Ascending aorta (tissue), 2 donors: ENCODE measurements at regions of chr12 and their contacts with region 1.

Region 1: DNA sequence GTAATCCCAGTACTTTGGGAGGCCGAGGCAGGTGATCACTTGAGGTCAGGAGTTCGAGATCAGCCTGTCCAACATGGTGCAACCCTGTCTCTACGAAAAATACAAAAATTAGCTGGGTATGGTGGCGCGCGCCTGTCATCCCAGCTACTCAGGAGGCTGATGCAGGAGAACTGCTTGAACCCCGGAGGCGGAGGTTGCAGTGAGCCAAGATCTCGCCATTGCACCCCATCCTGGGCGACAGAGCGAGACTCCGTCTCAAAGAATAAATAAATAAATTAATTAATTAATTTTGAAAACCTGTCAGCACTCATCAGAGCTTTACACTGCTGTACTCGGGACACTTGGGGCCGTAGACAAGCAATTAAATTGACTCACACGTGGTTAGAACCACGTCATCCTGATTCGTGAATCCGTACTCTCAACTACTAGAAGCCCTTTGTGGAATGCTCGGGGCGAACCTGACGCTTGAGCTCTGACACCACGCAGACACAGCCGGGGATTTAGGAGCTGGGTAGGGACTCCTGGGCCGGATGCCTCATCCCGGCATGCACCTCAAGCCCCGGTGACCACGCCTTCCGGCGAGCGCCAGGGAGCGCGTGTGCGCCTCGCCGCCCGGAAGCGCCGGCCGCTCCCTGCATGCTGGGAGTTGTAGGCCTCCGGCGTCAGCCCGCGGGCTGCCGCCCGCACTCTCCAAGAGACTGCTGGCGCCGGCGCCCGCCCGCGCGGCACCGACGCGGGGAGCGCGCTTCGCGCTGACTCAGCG is at the start of gene XPOT:
- DNase-seq: peak; percentile 85 to 97
- H3K4me3 ChIP-seq: peak within 1 kb of the TSS; percentile 76 to 98
- H3K27ac ChIP-seq: peak within 1 kb of the TSS; percentile 97 to 98
- H3K4me1 ChIP-seq: peaks cover 0 to 10% of the 10 kb centered on the region in 2 donors
- H3K27me3 ChIP-seq: no peaks in the 10 kb centered on the region
- CTCF ChIP-seq: no peak
- total RNA-seq, gene XPOT: 24.5 TPM

Region 2: DNA sequence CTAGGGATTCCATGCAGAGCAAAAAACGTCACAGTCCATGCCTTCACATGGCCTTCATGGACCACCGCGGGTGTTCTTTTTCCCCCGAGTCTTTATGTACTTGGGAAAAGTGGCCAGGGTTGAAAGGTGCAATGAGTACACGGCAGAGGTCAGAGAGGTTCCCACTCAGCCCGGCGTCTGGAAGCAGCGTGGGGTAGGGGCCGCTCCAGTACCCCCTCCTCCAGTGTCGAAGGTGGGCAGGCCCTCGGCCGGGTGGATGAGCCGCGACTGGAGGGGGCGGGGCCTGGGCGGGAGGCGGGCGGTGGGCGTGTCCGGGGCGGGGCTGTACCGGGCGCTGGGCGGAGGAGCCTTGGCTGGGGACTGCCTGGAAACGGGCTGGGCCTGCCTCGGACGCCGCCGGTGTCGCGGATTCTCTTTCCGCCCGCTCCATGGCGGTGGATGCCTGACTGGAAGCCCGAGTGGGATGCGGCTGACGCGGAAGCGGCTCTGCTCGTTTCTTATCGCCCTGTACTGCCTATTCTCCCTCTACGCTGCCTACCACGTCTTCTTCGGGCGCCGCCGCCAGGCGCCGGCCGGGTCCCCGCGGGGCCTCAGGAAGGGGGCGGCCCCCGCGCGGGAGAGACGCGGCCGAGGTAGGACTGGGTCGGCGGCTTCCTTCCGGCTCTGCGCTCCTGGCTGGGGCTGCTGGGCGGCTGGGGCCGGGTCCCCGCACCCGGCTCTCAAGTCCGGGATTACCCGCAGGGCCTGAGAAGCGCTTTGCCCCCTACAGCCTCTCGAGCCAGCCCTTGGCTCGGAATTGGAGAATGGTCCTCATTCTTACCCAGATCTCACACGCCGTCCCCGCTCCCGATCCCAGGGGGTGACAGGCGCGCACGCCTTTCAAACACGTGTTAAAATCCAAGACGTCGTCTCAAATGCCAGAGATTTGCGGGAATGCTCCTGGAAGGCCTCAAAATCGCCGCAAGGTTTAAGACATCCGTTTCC is 624.1 kb before region 1 on chr12 and contains the start of gene RXYLT1:
- intact Hi-C with region 1: loop called (anchors 5 kb)
- DNase-seq: peak; percentile 16 to 89
- H3K4me3 ChIP-seq: peak within 1 kb of the TSS; percentile 73 to 84
- H3K27ac ChIP-seq: peak within 1 kb of the TSS; percentile 86
- H3K4me1 ChIP-seq: peaks cover 0 to 7% of the 10 kb centered on the region in 2 donors
- H3K27me3 ChIP-seq: no peaks in the 10 kb centered on the region
- CTCF ChIP-seq: no peak
- total RNA-seq, gene RXYLT1: 1.5 TPM

Region 3: GRCh38 chr12:64181504-64182291 is 222.2 kb before region 1 on chr12:
- intact Hi-C with region 1: loop called (anchors 2 kb)
- DNase-seq: peak in 1 of 2 donors; percentile 83
- H3K4me3 ChIP-seq: peak overlapping the region in 1 of 2 donors; percentile 48
- H3K27ac ChIP-seq: peak overlapping the region; percentile 73 to 84
- H3K4me1 ChIP-seq: peaks cover 0 to 9% of the 10 kb centered on the region in 2 donors
- H3K27me3 ChIP-seq: no peaks in the 10 kb centered on the region
- CTCF ChIP-seq: peak; percentile 22 to 58 (median 35)

Region 4: DNA sequence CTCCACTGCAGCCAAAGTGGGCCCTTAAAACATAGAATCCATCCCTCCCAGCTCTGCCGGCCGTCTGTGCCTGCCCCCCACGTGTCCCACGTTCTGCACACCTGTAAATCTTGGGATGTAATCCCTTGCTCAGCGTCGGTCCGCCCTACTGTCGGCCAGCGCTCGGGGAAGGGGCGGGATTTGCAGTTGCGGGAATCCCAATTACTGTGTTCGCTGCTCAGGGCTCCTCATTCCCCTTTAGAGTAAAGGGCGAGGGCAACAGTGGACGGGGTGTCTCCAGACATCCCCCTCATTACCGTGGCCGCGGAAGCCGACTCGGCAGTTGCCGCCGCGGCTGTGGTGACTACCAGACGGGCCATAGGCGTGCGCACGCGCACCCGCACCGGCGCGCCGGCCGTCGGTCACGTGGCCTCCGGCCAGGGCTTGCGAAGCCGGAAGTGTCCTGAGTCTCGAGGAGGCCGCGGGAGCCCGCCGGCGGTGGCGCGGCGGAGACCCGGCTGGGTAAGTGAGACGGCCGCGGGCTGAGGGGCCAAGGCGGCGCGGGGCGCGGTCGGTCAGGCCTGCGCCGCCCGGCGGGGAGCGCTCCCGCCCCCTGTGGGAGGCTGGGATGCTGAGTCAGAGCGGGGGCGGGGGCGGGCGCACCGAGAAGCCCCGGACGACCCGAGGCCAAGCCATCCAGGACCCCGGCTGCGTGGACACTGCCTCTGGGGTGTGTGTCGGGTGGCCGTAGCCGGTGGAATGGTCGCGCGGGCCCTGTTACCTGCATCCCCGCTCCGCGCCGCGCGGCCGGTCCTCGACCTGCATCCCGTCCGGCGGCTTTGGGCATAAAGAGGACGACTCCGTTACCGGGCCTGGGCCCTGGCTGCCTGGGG is 48.0 kb after region 1 on chr12 and contains the start of gene TBK1:
- intact Hi-C with region 1: loop called (anchors 1 kb)
- DNase-seq: peak; percentile 79 to 95
- H3K4me3 ChIP-seq: peak within 1 kb of the TSS; percentile 96 to 97
- H3K27ac ChIP-seq: peak within 1 kb of the TSS; percentile 99
- H3K4me1 ChIP-seq: peaks cover 0 to 7% of the 10 kb centered on the region in 2 donors
- H3K27me3 ChIP-seq: no peaks in the 10 kb centered on the region
- CTCF ChIP-seq: peak in 1 of 3 experiments; percentile 32
- total RNA-seq, gene TBK1: 3.9 TPM

Region 5: DNA sequence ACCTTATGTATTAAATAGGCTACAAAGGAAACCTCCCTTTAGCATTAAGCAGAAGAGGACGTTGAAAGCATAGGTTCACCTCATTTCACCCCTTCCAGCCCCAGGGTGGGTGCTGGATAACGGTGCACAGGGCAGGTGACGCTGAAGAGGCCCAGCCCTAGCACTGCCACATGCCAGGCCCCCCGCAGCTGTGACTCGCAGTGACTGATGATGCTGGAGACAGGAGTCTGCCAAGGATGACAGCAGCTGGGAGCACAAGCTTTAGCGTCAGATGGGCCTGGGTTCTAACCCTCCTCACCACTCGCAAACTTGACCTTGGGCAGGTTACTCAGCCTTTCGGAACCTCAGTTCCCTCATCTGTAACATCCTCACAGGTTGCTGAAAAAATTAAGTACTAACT is 124.7 kb after region 1 on chr12:
- intact Hi-C with region 1: no loop called
- DNase-seq: no peak
- H3K4me3 ChIP-seq: no peak overlapping the region
- H3K27ac ChIP-seq: no peak overlapping the region
- H3K4me1 ChIP-seq: no peaks in the 10 kb centered on the region
- H3K27me3 ChIP-seq: no peaks in the 10 kb centered on the region
- CTCF ChIP-seq: no peak